ENCODE measurements at regions of chr20 and their contacts with region 1.

Region 1: GRCh38 chr20:44217342-44218092 is 6.9 kb upstream of the OSER1 start:
- DNase-seq: peak; percentile 87
- H3K4me3 ChIP-seq: no peak overlapping the region
- H3K27ac ChIP-seq: no peak overlapping the region
- H3K4me1 ChIP-seq: no peaks in the 10 kb centered on the region
- H3K27me3 ChIP-seq: no peaks in the 10 kb centered on the region
- CTCF ChIP-seq: peak; percentile 88

Region 2: GRCh38 chr20:44310664-44311639 is 93.4 kb after region 1 on chr20 and contains the start of gene FITM2:
- intact Hi-C with region 1: loop called (anchors 2 kb)
- DNase-seq: peak; percentile 99
- H3K4me3 ChIP-seq: peak within 1 kb of the TSS; percentile 97
- H3K27ac ChIP-seq: peak within 1 kb of the TSS; percentile 56
- H3K4me1 ChIP-seq: peaks cover 4% of the 10 kb centered on the region
- H3K27me3 ChIP-seq: no peaks in the 10 kb centered on the region
- CTCF ChIP-seq: peak; percentile 84
- total RNA-seq, gene FITM2: 10.1 to 11.6 TPM

Region 3: DNA sequence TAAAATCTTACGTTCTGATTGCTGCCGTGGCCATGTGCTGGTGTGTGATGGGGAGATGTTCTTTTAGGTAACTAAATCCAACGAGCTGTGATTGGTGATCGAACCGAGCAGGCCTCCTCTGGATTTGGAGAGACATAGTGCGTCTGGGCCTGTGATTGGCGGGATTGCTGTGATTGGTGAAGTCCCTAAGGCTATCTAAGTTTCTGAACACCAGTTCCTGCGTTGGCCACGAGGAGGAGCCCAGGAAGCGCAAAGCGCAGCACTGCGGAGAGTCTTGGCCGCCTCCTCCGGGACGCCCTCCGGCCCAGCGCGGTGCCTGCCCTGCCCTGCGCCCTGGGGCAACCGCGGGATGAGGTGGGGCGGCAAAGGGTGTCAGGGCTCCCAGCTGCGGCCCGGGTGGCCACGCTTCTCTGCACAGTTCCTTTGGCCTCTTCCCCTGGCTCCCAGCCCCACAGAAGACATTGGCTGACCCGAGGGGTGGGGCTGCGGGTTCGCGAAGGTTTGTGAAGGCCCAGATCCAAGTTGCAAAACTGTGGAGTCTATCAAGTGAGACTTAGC is 171.0 kb after region 1 on chr20:
- intact Hi-C with region 1: loop called (anchors 2 kb)
- DNase-seq: peak; percentile 90
- H3K4me3 ChIP-seq: no peak overlapping the region
- H3K27ac ChIP-seq: no peak overlapping the region
- H3K4me1 ChIP-seq: peaks cover 8% of the 10 kb centered on the region
- H3K27me3 ChIP-seq: no peaks in the 10 kb centered on the region
- CTCF ChIP-seq: peak; percentile 71

Region 4: DNA sequence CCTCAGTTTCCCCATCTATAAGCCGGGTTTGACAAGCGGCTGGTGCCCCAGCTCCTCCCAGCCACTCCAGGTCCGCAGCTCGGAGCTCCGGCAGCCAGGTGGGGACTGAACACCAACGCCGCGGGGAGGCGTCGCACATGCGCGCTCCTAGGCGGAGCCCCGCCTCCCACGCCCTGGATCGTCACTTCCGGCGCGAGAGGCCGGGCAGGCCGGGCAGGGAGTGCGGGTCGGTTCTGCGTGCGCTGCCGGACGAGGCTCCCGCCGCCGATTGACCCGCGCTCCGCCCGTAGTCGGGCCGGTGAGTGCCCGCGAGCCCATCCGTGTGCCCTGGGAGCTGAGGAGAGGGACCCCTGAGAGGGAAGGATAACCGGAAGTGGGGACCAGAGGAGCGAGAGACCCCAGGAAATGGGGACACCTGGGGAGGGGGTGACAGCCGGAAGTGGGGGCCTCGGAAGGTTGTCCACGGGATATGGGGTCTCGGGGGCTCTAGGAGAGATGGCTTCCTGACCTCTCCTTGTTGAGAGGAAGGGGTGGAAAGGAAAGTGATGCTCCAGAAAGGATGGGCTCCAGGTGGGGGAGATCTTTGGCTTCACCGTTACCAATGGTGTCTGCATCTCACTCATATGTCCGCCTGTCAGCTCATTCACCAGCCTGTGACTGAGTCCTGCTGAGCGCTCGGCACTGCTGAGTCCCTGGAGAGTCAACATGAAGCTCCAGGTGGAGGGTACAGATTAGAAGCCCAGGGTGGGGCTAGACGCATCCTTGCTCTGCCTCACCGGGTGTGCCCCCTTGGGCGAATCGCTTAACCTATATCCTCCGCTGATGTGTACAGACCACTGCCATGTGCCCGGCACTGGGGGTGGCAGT is 258.4 kb after region 1 on chr20 and contains the start of gene TTPAL:
- intact Hi-C with region 1: loop called (anchors 5 kb)
- DNase-seq: peak; percentile 93
- H3K4me3 ChIP-seq: peak within 1 kb of the TSS; percentile 68
- H3K27ac ChIP-seq: peak within 1 kb of the TSS; percentile 72
- H3K4me1 ChIP-seq: no peaks in the 10 kb centered on the region
- H3K27me3 ChIP-seq: no peaks in the 10 kb centered on the region
- CTCF ChIP-seq: no peak
- total RNA-seq, gene TTPAL: 8.4 to 11.6 TPM

Region 5: DNA sequence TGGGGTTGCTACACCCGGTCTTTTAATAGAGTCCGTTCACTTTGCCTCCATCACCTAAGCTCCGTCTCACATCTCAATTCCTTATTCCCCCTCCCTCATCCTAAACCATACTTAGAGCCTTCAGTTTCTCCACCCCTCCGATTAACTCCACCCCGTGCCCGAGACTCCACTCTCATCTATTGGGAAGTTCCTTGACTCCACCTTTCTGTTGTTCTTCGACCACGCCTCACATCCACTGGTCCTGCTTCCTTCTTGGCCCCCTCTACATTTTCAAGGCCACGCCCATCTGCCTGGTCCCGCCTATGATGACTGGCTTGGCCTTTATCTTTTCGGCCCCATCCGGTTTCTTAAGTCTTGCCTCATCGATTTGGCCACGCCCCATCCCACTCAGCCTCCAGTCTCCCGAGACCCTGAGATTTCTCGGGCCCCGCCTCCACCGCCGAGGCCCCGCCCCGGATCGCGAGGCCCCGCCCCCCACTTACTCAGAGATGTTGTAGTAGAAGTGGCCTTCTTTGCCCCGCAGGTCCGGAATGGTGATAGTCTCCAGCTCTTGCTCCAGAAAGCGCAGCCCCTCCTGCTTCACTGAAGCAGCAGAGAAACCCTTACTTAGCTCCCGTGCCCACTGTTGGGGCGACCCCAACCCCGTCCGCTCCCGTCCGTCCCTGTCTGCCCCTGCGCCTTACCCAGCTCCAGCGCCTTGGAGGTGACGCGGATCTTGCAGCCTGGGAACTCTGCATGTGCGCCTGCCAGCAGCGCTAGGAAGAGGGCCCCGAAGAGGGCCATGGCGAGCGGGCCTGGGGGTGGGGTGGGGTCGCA is 1693.4 kb after region 1 on chr20:
- intact Hi-C with region 1: no loop called
- DNase-seq: peak; percentile 98
- H3K4me3 ChIP-seq: peak overlapping the region; percentile 46
- H3K27ac ChIP-seq: peak overlapping the region; percentile 75
- H3K4me1 ChIP-seq: peaks cover 7% of the 10 kb centered on the region
- H3K27me3 ChIP-seq: no peaks in the 10 kb centered on the region
- CTCF ChIP-seq: no peak

Measured in colonic mucosa (tissue), 4 donors.